T-cell (primary cell): ENCODE measurements at regions of chr15 and their contacts with region 1.

Region 1: GRCh38 chr15:45611305-45611704 is 23.5 kb upstream of the SQOR start:
- DNase-seq: peak in 1 of 35 experiments; percentile 37
- ATAC-seq: no peak
- H3K4me3 ChIP-seq: no peak overlapping the region
- H3K4me3 Mint-ChIP-seq: no peak overlapping the region
- H3K27ac ChIP-seq: no peak overlapping the region
- H3K27ac Mint-ChIP-seq: no peak overlapping the region
- H3K4me1 ChIP-seq: no peaks in the 10 kb centered on the region
- H3K4me1 Mint-ChIP-seq: no peaks in the 10 kb centered on the region
- H3K27me3 ChIP-seq: no peaks in the 10 kb centered on the region
- H3K27me3 Mint-ChIP-seq: no peaks in the 10 kb centered on the region

Region 2: GRCh38 chr15:44606740-44607139 is 1004.6 kb before region 1 on chr15:
- CTCF ChIA-PET with region 1: no interaction called
- POLR2A ChIA-PET with region 1: interaction called in 1 of 2 experiments, 13 read pairs
- DNase-seq: no peak
- ATAC-seq: no peak
- H3K4me3 ChIP-seq: no peak overlapping the region
- H3K4me3 Mint-ChIP-seq: no peak overlapping the region
- H3K27ac ChIP-seq: no peak overlapping the region
- H3K27ac Mint-ChIP-seq: peak overlapping the region in 1 of 2 donors; percentile 7
- H3K4me1 ChIP-seq: no peaks in the 10 kb centered on the region
- H3K4me1 Mint-ChIP-seq: no peaks in the 10 kb centered on the region
- H3K27me3 ChIP-seq: no peaks in the 10 kb centered on the region
- H3K27me3 Mint-ChIP-seq: no peaks in the 10 kb centered on the region

Region 3: DNA sequence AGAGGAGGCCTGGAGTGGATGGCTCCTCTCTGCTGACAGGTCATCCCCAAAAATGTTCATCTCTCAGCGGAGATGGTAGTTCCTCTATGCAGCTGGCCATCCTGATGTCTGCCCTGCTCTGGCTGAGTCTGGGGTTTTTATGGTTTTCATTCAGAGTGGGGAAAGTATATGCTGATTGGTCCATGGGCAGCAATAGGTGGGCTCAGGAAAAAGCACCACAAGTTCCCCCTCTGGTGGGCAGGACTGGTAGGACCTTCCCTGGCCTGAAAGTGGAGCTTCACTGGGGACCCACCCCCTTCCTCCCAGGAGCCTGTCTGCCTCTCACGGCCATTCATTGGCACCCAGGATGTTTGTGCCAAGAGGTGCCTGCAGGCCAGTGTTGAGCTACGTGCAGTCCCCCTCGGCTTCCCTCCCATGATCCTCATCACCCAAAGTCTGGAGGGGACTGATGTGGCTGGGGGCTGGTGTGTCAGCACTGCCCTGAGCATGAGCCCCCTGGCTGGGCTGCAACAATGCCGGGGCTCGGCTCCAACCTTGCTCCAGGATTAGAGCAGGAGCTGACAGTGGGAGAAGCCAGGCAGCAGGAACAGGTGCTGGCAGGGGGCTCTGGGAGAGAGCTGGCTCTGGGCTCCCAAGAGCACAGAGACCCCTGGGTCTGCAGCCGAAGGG is 37.2 kb before region 1 on chr15:
- CTCF ChIA-PET with region 1: interaction called, 3 to 10 read pairs
- POLR2A ChIA-PET with region 1: no interaction called
- DNase-seq: peak in 12 of 35 experiments; percentile 3 to 24 (median 8)
- ATAC-seq: peak in 2 of 4 experiments; percentile 30 to 40
- H3K4me3 ChIP-seq: no peak overlapping the region
- H3K4me3 Mint-ChIP-seq: no peak overlapping the region
- H3K27ac ChIP-seq: no peak overlapping the region
- H3K27ac Mint-ChIP-seq: no peak overlapping the region
- H3K4me1 ChIP-seq: no peaks in the 10 kb centered on the region
- H3K4me1 Mint-ChIP-seq: no peaks in the 10 kb centered on the region
- H3K27me3 ChIP-seq: peaks cover 0 to 22% of the 10 kb centered on the region in 2 experiments
- H3K27me3 Mint-ChIP-seq: peaks cover 17 to 40% of the 10 kb centered on the region in 2 donors

Region 4: GRCh38 chr15:45587095-45587860 is 24.0 kb before region 1 on chr15 and contains the start of gene BLOC1S6:
- CTCF ChIA-PET with region 1: interaction called, 6 to 16 read pairs
- POLR2A ChIA-PET with region 1: interaction called in 1 of 2 experiments, 4 read pairs
- DNase-seq: peak; percentile 77 to 94 (median 86)
- ATAC-seq: peak; percentile 78 to 86 (median 81)
- H3K4me3 ChIP-seq: peak within 1 kb of the TSS; percentile 78 to 89
- H3K4me3 Mint-ChIP-seq: peak within 1 kb of the TSS; percentile 96 to 100 (median 100)
- H3K27ac ChIP-seq: peak within 1 kb of the TSS; percentile 97
- H3K27ac Mint-ChIP-seq: peak within 1 kb of the TSS; percentile 100
- H3K4me1 ChIP-seq: peaks cover 21 to 27% of the 10 kb centered on the region in 2 experiments
- H3K4me1 Mint-ChIP-seq: peaks cover 36 to 51% (median 50%) of the 10 kb centered on the region in 3 donors
- H3K27me3 ChIP-seq: no peaks in the 10 kb centered on the region
- H3K27me3 Mint-ChIP-seq: no peaks in the 10 kb centered on the region
- total RNA-seq, gene BLOC1S6: 37.5 to 59.5 (median 40.5) TPM

Region 5: DNA sequence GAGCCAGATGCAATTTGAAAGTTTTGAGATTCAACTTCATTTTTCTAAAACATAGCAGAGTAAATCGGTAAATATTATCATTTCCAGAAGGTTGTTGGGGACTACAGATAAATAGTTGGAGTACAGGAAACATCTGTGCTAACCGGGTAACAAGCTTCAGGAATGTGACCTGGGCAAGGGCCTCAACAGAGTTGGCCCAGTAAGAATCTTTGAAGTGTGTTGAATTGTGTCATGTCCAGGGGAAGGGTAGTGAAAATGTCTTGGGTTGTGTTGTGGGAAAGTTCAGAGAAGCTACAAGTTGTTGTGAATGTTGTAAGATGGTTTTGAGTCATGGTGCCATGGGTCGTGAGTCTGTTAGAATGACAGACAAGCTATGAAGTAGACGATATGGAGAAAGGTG is 59.2 kb after region 1 on chr15:
- CTCF ChIA-PET with region 1: no interaction called
- POLR2A ChIA-PET with region 1: no interaction called
- DNase-seq: no peak
- ATAC-seq: no peak
- H3K4me3 ChIP-seq: no peak overlapping the region
- H3K4me3 Mint-ChIP-seq: no peak overlapping the region
- H3K27ac ChIP-seq: no peak overlapping the region
- H3K27ac Mint-ChIP-seq: no peak overlapping the region
- H3K4me1 ChIP-seq: no peaks in the 10 kb centered on the region
- H3K4me1 Mint-ChIP-seq: peaks cover 3 to 11% (median 5%) of the 10 kb centered on the region in 3 donors
- H3K27me3 ChIP-seq: no peaks in the 10 kb centered on the region
- H3K27me3 Mint-ChIP-seq: no peaks in the 10 kb centered on the region

Region 6: DNA sequence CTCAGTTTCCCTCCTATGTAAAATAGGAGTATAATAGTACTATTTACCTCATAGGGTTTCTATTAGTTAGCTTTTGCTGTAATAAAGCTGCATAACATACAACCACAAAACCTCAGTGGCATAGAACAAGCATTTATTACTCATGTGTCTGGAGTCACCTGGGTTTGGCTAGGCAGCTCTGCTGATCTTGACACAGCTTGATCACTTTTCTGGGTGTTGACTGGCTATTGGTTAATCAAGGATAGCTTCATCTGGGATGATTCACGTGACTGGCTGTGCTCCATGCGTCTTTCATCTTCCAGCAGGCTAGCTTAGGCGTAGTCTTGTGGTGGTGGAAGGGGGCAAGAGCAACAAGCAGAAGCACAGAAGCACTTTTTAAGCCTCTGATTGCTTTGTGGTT is 136.1 kb after region 1 on chr15:
- CTCF ChIA-PET with region 1: no interaction called
- POLR2A ChIA-PET with region 1: no interaction called
- DNase-seq: no peak
- ATAC-seq: no peak
- H3K4me3 ChIP-seq: no peak overlapping the region
- H3K4me3 Mint-ChIP-seq: no peak overlapping the region
- H3K27ac ChIP-seq: no peak overlapping the region
- H3K27ac Mint-ChIP-seq: no peak overlapping the region
- H3K4me1 ChIP-seq: no peaks in the 10 kb centered on the region
- H3K4me1 Mint-ChIP-seq: no peaks in the 10 kb centered on the region
- H3K27me3 ChIP-seq: peaks cover 0 to 2% of the 10 kb centered on the region in 2 experiments
- H3K27me3 Mint-ChIP-seq: peaks cover 14 to 19% of the 10 kb centered on the region in 2 donors